ENCODE measurements at regions of chr6 and their contacts with region 1.

Region 1: GRCh38 chr6:34154668-34155447 is 9.0 kb upstream of the GRM4 start:
- DNase-seq: peak; percentile 74
- ATAC-seq: peak; percentile 94
- H3K4me3 Mint-ChIP-seq: peak overlapping the region; percentile 56
- H3K27ac Mint-ChIP-seq: no peak overlapping the region
- H3K4me1 Mint-ChIP-seq: peaks cover 15% of the 10 kb centered on the region
- H3K27me3 Mint-ChIP-seq: peaks cover 41% of the 10 kb centered on the region
- CTCF ChIP-seq: peak; percentile 90

Region 2: DNA sequence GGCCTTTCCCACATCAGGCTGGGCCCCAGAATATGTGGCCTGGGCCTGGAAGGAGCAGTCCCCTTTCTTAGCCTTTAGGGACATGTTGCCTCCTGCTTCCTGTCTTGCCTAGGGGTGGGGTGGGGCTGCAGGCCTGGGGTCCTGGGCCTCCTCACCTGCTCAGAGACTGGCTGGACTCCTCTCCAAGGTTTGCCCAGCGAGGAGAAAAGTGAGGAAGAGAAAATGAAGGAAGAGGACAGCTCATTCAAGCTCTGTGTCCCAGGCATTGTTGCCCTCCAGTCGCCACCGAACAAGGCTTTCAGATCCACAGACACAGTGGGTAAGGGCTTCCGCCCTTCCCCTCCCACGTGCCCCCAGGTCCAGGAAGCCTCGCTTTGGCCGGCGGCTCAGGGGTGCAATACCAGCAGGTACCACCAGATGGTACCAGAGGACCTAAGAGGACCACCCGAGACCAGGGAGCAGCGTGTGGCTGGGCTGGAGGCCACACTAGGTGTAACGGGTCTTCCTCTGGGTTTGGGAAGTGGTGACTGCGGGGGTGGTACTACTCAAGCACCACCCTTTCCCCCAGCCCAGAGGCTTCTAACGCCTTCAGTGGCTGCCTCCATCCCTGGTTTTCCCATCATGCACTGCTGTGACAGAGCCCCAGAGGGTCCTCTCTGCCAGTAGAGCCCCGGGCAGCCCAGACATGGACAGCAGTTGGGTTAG is 569.3 kb before region 1 on chr6:
- CTCF ChIA-PET with region 1: no interaction called
- POLR2A ChIA-PET with region 1: no interaction called
- intact Hi-C with region 1: loop called (anchors 5 kb)
- DNase-seq: peak; percentile 90
- ATAC-seq: peak; percentile 94
- H3K4me3 Mint-ChIP-seq: peak overlapping the region; percentile 61
- H3K27ac Mint-ChIP-seq: peak overlapping the region; percentile 93
- H3K4me1 Mint-ChIP-seq: peaks cover 31% of the 10 kb centered on the region
- H3K27me3 Mint-ChIP-seq: no peaks in the 10 kb centered on the region
- CTCF ChIP-seq: peak; percentile 96

Region 3: DNA sequence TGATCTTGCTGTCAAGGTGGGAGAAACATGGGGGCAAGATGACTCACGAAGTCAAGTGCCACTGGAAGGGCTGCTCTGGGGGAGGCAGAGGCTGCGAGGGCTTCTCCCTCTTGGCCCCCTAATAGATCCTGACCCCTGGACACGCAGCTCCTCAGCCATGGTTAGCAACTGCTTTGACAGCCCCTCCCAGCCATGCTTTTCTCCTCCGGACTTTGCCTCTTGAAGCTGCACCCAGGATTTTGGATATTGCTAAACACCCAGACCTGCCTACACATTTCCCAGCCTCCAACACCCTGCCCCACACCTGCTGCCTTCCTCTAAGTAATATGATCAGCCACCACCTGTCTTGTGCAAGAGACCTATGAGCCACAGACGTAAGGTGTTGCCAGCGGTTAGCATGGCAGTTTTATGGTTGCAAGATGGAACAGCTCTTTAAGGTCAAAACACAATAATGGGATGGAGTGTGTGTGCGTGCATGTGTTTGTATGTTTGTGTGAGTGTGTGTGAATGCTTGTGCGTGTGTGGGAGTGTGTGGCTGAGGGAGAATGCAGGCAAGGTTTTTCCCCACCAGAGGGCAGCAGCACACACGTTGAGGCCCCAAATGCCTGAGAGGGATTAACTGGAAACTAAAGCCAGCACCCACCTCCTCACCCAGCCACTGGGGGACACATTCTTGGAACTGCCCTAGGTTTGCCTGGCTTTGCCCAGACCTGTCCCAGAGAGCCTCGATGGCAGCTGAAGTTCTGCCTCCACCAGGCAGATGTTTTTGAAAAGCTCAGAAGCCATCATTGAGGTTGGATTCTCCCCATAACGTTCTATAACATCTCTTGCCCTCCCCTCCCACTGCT is 410.6 kb before region 1 on chr6:
- CTCF ChIA-PET with region 1: interaction called, 4 read pairs
- POLR2A ChIA-PET with region 1: no interaction called
- intact Hi-C with region 1: loop called (anchors 1 kb)
- DNase-seq: peak; percentile 57
- ATAC-seq: peak; percentile 90
- H3K4me3 Mint-ChIP-seq: no peak overlapping the region
- H3K27ac Mint-ChIP-seq: no peak overlapping the region
- H3K4me1 Mint-ChIP-seq: peaks cover 2% of the 10 kb centered on the region
- H3K27me3 Mint-ChIP-seq: peaks cover 21% of the 10 kb centered on the region
- CTCF ChIP-seq: no peak

Region 4: DNA sequence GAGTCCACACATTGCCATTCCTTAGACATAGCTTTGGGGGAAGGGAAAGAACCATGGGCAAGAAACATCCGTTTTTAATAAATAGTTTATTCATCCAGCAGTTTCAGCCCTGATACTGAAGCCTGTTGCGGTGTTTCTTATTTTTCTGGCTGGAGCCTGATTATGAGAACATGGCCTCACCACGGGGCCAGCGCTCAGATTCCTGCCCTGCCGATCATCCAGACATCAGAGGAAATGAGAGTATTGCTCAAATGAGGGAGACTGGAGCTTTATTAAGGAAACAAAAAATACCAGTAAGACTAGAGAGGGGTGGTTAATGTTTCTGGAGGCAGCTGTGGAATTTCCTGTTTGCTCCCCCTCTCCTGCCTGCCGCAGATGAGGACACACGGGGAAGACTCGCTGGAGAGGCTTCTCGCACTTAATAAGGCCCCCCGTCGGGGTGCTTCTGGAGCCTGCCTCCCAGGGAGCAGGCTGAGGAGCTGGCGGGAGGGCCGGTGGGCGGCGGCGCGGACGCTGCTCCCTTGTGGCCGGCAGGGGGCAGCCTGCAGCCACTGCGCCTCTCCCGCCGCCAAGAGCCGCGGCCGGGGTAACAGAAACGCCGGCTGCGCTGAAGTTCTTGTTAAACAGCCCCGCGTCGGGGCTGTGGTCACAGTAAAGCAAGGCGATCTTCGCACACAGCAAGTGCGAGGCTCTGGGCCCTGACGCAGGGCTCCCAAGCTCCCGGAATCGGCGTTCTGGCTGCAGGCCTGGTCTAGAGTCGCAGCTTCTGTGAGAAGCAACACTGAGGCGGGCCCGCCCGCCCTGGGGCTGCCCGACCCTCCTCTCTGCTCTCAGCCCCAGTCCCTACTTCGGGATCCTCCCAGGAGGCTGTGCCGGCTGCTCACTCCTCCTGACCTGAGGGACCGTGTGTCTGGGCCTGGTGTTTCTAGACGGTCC is 383.4 kb before region 1 on chr6:
- CTCF ChIA-PET with region 1: interaction called, 29 read pairs
- POLR2A ChIA-PET with region 1: no interaction called
- intact Hi-C with region 1: loop called (anchors 1 kb)
- DNase-seq: peak; percentile 65
- ATAC-seq: peak; percentile 78
- H3K4me3 Mint-ChIP-seq: no peak overlapping the region
- H3K27ac Mint-ChIP-seq: no peak overlapping the region
- H3K4me1 Mint-ChIP-seq: peaks cover 5% of the 10 kb centered on the region
- H3K27me3 Mint-ChIP-seq: peaks cover 14% of the 10 kb centered on the region
- CTCF ChIP-seq: peak; percentile 91

Region 5: GRCh38 chr6:34055223-34055933 is 99.5 kb before region 1 on chr6:
- CTCF ChIA-PET with region 1: interaction called, 10 read pairs
- POLR2A ChIA-PET with region 1: no interaction called
- intact Hi-C with region 1: loop called (anchors 1 kb)
- DNase-seq: peak; percentile 56
- ATAC-seq: peak; percentile 84
- H3K4me3 Mint-ChIP-seq: no peak overlapping the region
- H3K27ac Mint-ChIP-seq: no peak overlapping the region
- H3K4me1 Mint-ChIP-seq: no peaks in the 10 kb centered on the region
- H3K27me3 Mint-ChIP-seq: peaks cover 21% of the 10 kb centered on the region
- CTCF ChIP-seq: no peak

Region 6: DNA sequence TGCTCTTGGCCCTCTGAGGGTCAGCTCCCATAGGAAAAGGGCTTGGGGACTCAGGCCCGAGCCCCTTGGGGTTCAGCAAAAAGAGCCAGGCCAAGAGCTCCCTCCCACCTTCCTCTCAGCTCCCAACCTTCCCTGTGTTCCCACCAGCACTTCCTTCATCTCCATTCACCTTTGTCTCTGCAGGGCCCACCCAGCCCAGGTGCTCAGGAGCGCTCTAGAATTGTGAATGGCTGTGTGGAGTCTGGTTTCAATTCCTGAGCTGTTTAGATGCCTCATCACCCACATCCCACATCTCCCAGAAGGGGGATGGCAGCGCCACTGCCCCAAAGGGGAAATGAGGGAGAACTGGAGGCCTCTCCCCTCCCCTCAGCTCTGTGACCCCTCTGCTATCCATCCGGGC is 16.7 kb before region 1 on chr6:
- CTCF ChIA-PET with region 1: no interaction called
- POLR2A ChIA-PET with region 1: interaction called, 12 read pairs
- intact Hi-C with region 1: no loop called
- DNase-seq: no peak
- ATAC-seq: no peak
- H3K4me3 Mint-ChIP-seq: no peak overlapping the region
- H3K27ac Mint-ChIP-seq: no peak overlapping the region
- H3K4me1 Mint-ChIP-seq: peaks cover 6% of the 10 kb centered on the region
- H3K27me3 Mint-ChIP-seq: peaks cover 75% of the 10 kb centered on the region
- CTCF ChIP-seq: no peak